Spleen (tissue), 13 donors: ENCODE measurements at regions of chrX and their contacts with region 1.

Region 1: GRCh38 chrX:107894038-107894437 is 68.4 kb downstream of the MID2 start:
- DNase-seq: no peak
- H3K4me3 ChIP-seq: no peak overlapping the region
- H3K27ac ChIP-seq: no peak overlapping the region
- H3K4me1 ChIP-seq: no peaks in the 10 kb centered on the region
- H3K27me3 ChIP-seq: no peaks in the 10 kb centered on the region
- CTCF ChIP-seq: peak; percentile 22 to 69 (median 60)
- POLR2A ChIP-seq: no peak

Region 2: DNA sequence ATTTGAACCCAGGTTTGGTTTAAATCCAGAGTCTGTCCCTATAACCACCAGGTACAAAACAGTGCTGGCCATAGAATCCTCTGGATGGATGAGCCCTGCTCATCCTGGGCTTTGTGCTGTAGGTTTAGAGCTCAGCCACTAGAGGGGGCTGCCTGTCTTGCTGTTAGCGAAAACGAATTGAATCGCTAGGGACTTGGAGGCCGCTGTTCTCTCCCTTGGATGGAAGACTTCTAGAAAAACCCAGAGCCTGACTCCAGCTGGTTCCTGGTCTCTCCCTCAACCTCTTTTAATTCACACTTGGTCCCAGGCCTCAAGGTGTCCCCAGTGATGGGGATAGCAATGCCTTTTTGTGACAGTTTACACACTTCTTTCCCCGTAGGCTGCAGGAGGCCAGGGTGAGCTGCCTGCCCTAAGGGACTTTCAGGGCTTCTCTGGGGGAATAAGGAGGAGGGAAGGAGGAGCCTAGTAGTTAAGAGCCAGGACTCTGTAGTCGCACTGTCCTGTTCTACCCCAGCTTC is 999.6 kb before region 1 on chrX:
- intact Hi-C with region 1: loop called (anchors 10 kb)
- DNase-seq: no peak
- H3K4me3 ChIP-seq: no peak overlapping the region
- H3K27ac ChIP-seq: no peak overlapping the region
- H3K4me1 ChIP-seq: no peaks in the 10 kb centered on the region
- H3K27me3 ChIP-seq: peaks cover 0 to 42% (median 0%) of the 10 kb centered on the region in 7 donors
- CTCF ChIP-seq: peak in 10 of 11 experiments; percentile 22 to 77 (median 73)
- POLR2A ChIP-seq: no peak

Region 3: GRCh38 chrX:107429090-107429489 is 464.9 kb before region 1 on chrX:
- intact Hi-C with region 1: no loop called
- DNase-seq: no peak
- H3K4me3 ChIP-seq: no peak overlapping the region
- H3K27ac ChIP-seq: no peak overlapping the region
- H3K4me1 ChIP-seq: no peaks in the 10 kb centered on the region
- H3K27me3 ChIP-seq: peaks cover 0 to under 1% (median 0%) of the 10 kb centered on the region in 7 donors
- CTCF ChIP-seq: peak in 5 of 11 experiments; percentile 12 to 44 (median 36)
- POLR2A ChIP-seq: no peak

Region 4: DNA sequence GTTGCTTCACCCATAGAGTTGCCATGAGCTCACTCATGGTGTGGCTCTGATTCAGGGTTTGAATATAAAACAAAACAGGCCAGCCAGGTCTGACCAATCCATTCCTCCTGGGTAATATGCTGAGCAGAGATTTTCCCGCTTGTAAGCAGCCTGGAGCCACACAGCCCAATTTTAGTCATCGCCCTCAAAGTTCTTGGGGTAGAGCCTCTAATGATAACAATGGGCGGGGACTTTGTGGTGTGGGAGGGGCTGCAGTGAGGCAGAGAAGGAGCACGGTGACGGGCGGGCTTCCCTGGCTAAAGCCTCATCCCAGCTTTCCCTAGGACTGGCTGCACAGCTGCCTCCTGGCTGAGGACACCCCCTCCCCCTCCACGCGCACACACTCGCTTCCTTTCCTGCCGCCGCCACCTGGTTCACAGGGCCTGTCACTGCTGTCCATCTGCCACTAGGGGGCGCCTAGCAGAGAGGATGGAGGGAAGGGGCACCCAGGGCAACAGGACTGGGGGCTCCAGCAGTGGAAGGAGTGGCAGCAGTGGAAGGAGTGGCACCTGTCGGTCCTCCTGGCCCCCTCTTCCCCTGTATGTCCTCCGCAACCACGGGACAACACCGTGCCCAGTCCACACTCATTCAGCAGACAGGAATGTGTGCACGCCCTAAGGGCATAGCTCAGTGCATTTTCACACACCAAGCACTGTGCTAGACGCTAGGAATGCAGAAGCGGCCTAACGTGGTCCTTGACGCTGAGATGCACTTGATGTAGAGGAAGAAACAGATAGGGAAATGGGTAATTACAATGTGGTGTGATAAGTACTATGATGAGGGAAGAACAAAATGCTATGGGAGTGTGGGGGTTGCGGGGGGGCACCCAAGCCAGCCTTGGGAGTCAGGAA is 238.9 kb before region 1 on chrX:
- intact Hi-C with region 1: loop called (anchors 10 kb)
- DNase-seq: peak; percentile 89
- H3K4me3 ChIP-seq: peak overlapping the region in 1 of 8 donors; percentile 31
- H3K27ac ChIP-seq: peak overlapping the region in 2 of 8 donors; percentile 30 to 32
- H3K4me1 ChIP-seq: peaks cover 0 to 18% (median 3%) of the 10 kb centered on the region in 6 donors
- H3K27me3 ChIP-seq: peaks cover 0 to 13% (median 0%) of the 10 kb centered on the region in 7 donors
- CTCF ChIP-seq: peak; percentile 20 to 80 (median 72)
- POLR2A ChIP-seq: no peak